PC-3 (cell line): ENCODE measurements at regions of chr18 and their contacts with region 1.

Region 1: GRCh38 chr18:8704361-8705279 is 736 bp upstream of the MTCL1 start:
- DNase-seq: peak; percentile 90
- ATAC-seq: peak; percentile 68
- H3K4me3 ChIP-seq: peak overlapping the region; percentile 75
- H3K27ac ChIP-seq: peak overlapping the region; percentile 51
- H3K4me1 ChIP-seq: peaks cover 49% of the 10 kb centered on the region
- H3K27me3 ChIP-seq: no peaks in the 10 kb centered on the region
- CTCF ChIP-seq: no peak

Region 2: GRCh38 chr18:8548186-8548585 is 156.4 kb before region 1 on chr18:
- CTCF ChIA-PET with region 1: no interaction called
- POLR2A ChIA-PET with region 1: no interaction called
- intact Hi-C with region 1: no loop called
- DNase-seq: peak; percentile 57
- ATAC-seq: no peak
- H3K4me3 ChIP-seq: no peak overlapping the region
- H3K27ac ChIP-seq: no peak overlapping the region
- H3K4me1 ChIP-seq: peaks cover 3% of the 10 kb centered on the region; the same call in 1 of the 2 replicates
- H3K27me3 ChIP-seq: peaks cover 36% of the 10 kb centered on the region
- CTCF ChIP-seq: no peak

Region 3: DNA sequence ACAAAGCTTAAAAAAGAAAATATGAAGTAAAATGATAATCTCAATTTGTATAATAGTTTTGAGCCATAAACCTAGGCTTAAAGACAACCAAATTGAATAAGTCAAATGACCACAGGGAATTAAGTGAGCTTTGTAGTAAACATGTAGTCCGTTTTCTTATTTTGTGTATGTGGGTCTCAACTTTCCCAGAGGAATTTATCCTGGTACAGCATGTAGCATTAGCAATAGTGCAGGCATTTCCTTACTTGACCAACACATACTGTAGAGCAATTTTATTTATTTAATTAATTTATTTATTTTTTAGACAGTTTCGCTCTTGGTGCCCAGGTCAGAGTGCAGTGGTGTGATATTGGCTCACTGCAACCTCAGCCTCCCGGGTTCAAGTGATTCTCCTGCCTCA is 36.8 kb before region 1 on chr18:
- CTCF ChIA-PET with region 1: no interaction called
- POLR2A ChIA-PET with region 1: interaction called, 12 read pairs
- intact Hi-C with region 1: loop called (anchors 5 kb)
- DNase-seq: no peak
- ATAC-seq: no peak
- H3K4me3 ChIP-seq: no peak overlapping the region
- H3K27ac ChIP-seq: no peak overlapping the region
- H3K4me1 ChIP-seq: peaks cover 24% of the 10 kb centered on the region
- H3K27me3 ChIP-seq: no peaks in the 10 kb centered on the region
- CTCF ChIP-seq: no peak

Region 4: DNA sequence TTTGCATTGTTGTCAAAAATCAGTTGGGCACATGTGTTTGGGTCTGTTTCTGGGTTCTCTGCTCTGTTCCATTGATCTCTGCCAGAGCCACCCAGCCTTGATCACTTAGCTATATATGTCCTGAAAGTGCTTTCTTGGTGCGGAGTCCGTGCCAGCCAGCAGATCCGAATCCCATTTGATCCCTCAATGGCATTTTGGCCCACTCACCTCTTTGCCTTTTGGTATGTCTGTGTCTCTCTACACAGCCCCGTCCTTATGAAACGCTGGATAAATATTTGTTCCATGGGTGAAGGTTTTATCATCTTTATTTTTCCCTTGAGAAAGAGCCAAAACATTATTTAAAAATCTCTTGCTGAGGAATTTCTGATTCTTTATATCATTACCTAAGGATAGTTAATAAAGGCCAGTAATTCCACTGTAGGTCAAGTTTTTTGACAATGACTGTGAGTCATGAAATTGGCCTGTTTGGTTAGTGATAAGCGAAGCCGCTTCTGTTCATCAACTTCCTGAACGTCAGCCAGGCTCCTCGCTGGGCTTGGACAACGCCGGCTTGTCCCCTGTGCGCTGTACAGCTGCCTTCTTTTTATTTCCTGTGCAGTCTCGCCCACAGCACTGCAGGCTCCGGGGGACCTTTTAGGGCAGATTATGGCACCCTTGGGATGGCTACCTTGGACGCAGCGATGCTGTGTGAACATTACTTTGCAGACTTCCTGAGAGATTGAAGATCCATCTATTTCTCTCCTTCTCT is 25.6 kb after region 1 on chr18:
- CTCF ChIA-PET with region 1: interaction called, 4 read pairs
- POLR2A ChIA-PET with region 1: interaction called, 8 read pairs
- intact Hi-C with region 1: loop called (anchors 1 kb)
- DNase-seq: peak; percentile 96
- ATAC-seq: peak; percentile 97
- H3K4me3 ChIP-seq: peak overlapping the region; percentile 48
- H3K27ac ChIP-seq: peak overlapping the region; percentile 82
- H3K4me1 ChIP-seq: peaks cover 19% of the 10 kb centered on the region
- H3K27me3 ChIP-seq: no peaks in the 10 kb centered on the region
- CTCF ChIP-seq: no peak

Region 5: DNA sequence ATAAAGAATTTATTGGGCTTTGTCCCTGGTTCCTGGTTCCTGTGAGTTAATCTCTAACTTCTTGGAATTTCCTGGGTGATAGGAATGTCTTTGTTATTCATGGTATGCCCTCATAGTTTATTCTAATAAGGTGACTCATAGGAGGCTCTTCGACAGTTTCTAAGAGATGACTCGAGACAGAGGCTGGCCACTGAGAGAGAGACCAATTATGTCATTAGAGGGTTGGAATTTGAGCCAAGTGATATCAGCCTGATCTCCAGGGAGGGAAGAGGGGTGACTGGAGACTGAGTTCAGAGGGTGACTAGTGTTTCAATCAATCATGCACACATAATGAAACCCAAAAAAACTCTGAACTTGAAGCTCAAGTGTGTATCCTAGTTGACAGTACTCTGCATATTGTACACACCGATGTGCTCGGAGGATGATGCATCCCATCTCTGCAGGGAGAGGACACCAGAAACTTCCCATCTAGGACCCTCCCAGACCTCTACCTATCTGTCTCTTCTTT is 186.4 kb after region 1 on chr18:
- CTCF ChIA-PET with region 1: no interaction called
- POLR2A ChIA-PET with region 1: no interaction called
- intact Hi-C with region 1: loop called (anchors 2 kb)
- DNase-seq: peak; percentile 99
- ATAC-seq: peak; percentile 99
- H3K4me3 ChIP-seq: peak overlapping the region; percentile 4; the same call in 1 of the 2 replicates
- H3K27ac ChIP-seq: peak overlapping the region; percentile 78
- H3K4me1 ChIP-seq: peaks cover 28% of the 10 kb centered on the region
- H3K27me3 ChIP-seq: no peaks in the 10 kb centered on the region
- CTCF ChIP-seq: no peak

Region 6: GRCh38 chr18:8982416-8983184 is 278.0 kb after region 1 on chr18:
- CTCF ChIA-PET with region 1: interaction called, 13 read pairs
- POLR2A ChIA-PET with region 1: interaction called, 5 read pairs
- intact Hi-C with region 1: loop called (anchors 1 kb)
- DNase-seq: peak; percentile 86
- ATAC-seq: peak; percentile 97
- H3K4me3 ChIP-seq: no peak overlapping the region
- H3K27ac ChIP-seq: no peak overlapping the region
- H3K4me1 ChIP-seq: no peaks in the 10 kb centered on the region
- H3K27me3 ChIP-seq: no peaks in the 10 kb centered on the region
- CTCF ChIP-seq: peak; percentile 89

Region 7: DNA sequence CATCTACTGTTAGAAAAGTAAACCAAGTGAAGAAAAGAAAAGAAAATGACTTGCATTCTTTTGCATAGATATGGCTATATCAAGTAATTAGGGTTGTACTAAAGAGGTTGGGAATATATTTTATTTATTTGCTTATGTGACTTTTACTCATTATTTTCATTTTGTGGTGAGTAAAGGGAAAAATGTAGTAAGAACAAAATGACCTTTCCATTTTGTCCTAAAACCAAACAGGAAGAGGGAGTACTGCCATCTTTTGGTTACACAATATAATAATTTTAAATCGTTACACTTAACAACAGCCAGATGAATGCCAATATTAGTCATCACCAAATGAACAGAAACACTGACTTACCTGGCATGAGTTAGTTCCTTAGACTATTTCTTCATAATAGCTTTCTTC is 350.6 kb after region 1 on chr18:
- CTCF ChIA-PET with region 1: no interaction called
- POLR2A ChIA-PET with region 1: no interaction called
- intact Hi-C with region 1: loop called (anchors 5 kb)
- DNase-seq: peak; percentile 90
- ATAC-seq: peak; percentile 96
- H3K4me3 ChIP-seq: no peak overlapping the region
- H3K27ac ChIP-seq: peak overlapping the region; percentile 33
- H3K4me1 ChIP-seq: peaks cover 16% of the 10 kb centered on the region
- H3K27me3 ChIP-seq: no peaks in the 10 kb centered on the region
- CTCF ChIP-seq: peak; percentile 71

Region 8: DNA sequence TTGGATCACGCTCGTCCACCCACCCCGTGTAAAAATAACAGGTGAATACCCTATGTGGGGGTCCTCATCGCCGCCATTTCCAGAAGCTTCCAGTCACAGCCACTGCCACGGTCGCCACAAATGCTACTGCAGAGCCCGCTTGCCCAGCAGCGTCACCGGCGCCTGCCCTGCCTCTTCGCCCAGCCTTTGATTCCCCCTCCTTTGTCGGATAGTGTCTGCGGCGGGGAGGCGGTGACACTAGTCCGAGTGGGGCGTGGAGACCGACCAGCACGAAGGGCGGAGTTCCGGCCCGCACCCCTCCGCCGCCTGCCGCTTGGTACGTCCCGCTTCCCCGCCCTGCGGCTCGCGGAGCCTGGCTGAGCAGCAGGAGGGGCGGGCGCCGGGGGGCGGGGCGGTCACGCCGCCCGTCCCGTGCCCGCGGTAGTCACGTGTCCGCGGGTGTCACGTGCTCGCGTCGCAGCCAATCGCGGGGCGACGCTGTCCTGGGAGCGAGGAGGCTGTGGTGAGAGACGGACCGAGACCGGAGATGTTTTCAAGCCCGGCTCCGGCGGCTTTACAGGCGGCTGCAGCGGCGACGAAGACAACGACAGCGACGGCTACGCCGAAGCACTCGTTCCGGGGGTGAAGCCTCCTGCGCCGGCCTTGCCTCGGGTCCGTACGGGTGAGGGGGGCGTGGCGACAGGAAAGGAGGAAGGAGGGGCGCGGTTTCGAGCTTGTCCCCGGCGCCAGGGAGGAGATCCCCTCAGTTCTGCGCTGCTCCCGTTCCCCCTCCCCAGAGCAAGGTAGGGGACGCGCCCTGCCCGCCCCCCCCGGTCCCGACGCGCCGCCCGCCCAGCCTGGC is 431.9 kb after region 1 on chr18 and contains the start of gene ANKRD12:
- CTCF ChIA-PET with region 1: no interaction called
- POLR2A ChIA-PET with region 1: no interaction called
- intact Hi-C with region 1: loop called (anchors 5 kb)
- DNase-seq: peak; percentile 98
- ATAC-seq: peak; percentile 72
- H3K4me3 ChIP-seq: peak within 1 kb of the TSS; percentile 77
- H3K27ac ChIP-seq: peak within 1 kb of the TSS; percentile 88
- H3K4me1 ChIP-seq: peaks cover 58% of the 10 kb centered on the region
- H3K27me3 ChIP-seq: no peaks in the 10 kb centered on the region
- CTCF ChIP-seq: no peak
- total RNA-seq, gene ANKRD12: 14.5 and 19.1 TPM in 2 replicates